K562 (cell line): ENCODE measurements at regions of chr1 and their contacts with region 1.

Region 1: GRCh38 chr1:7902478-7903085 is 38.1 kb downstream of the TNFRSF9 start:
- DNase-seq: peak; percentile 81 to 87 (median 85)
- ATAC-seq: peak; percentile 98
- H3K4me3 ChIP-seq: no peak overlapping the region
- H3K27ac ChIP-seq: no peak overlapping the region
- H3K4me1 ChIP-seq: peaks cover 0 to 3% of the 10 kb centered on the region in 2 experiments; a peak in 3 of 5 replicates
- H3K27me3 ChIP-seq: peaks cover 3 to 9% of the 10 kb centered on the region in 2 experiments; a peak in 4 of 5 replicates
- CTCF ChIP-seq: peak; percentile 73 to 85 (median 84)
- EP300 ChIP-seq: no peak
- POLR2A ChIP-seq: no peak
- RAD21 ChIP-seq: peak; percentile 80 to 92

Region 2: DNA sequence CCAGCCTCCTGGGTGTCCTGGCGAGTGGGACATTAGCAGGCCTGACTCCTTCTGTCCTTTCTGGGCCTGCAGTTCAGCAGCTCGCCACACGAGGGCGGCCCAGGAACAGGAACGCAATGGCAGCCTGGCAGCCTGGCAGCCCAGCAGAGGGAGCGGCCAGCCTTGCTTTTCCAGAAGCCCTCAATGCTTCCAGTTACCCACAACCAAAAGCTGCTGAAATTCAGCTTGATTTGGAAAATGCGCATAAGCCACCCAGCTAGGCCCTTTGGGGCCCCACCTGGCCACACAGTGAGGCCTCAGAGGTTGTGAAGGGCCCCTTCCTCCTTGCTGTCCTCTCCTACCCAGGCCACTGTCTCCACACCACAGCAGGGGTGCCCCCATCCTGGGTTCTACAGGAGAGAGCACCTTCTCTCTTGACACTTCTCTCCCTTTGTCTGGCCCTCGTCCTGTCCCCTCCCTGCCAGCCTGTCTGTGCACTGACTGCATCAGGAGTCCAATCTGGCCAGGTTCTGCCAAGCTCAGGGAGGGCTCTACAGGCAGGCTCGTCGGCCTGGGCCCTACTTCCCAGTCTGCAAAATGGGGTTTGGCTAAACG is 234.9 kb before region 1 on chr1:
- CTCF ChIA-PET with region 1: interaction called, 43 read pairs
- POLR2A ChIA-PET with region 1: interaction called, 3 read pairs
- in situ Hi-C with region 1: no loop called
- intact Hi-C with region 1: loop called (anchors 2 kb)
- DNase-seq: peak; percentile 82 to 85 (median 84)
- ATAC-seq: peak; percentile 85
- H3K4me3 ChIP-seq: no peak overlapping the region
- H3K27ac ChIP-seq: no peak overlapping the region
- H3K4me1 ChIP-seq: peaks cover 0 to 35% of the 10 kb centered on the region in 2 experiments; a peak in 2 of 5 replicates
- H3K27me3 ChIP-seq: peaks cover 27 to 58% of the 10 kb centered on the region in 2 experiments; a peak in 4 of 5 replicates
- CTCF ChIP-seq: peak; percentile 99
- EP300 ChIP-seq: no peak
- POLR2A ChIP-seq: no peak
- RAD21 ChIP-seq: peak; percentile 94 to 98

Region 3: GRCh38 chr1:7680207-7680954 is 222.2 kb before region 1 on chr1:
- CTCF ChIA-PET with region 1: no interaction called
- POLR2A ChIA-PET with region 1: no interaction called
- in situ Hi-C with region 1: loop called (anchors 5 kb)
- intact Hi-C with region 1: no loop called
- DNase-seq: peak; percentile 18 to 75 (median 60)
- ATAC-seq: peak; percentile 68
- H3K4me3 ChIP-seq: peak overlapping the region; percentile 34
- H3K27ac ChIP-seq: no peak overlapping the region
- H3K4me1 ChIP-seq: peaks cover 0 to 18% of the 10 kb centered on the region in 2 experiments; a peak in 2 of 5 replicates
- H3K27me3 ChIP-seq: peaks cover 75 to 98% of the 10 kb centered on the region in 2 experiments
- CTCF ChIP-seq: no peak
- EP300 ChIP-seq: no peak
- POLR2A ChIP-seq: no peak
- RAD21 ChIP-seq: no peak

Region 4: GRCh38 chr1:7752512-7753417 is 149.8 kb before region 1 on chr1:
- CTCF ChIA-PET with region 1: no interaction called
- POLR2A ChIA-PET with region 1: no interaction called
- in situ Hi-C with region 1: no loop called
- intact Hi-C with region 1: loop called (anchors 5 kb)
- DNase-seq: peak; percentile 34 to 71 (median 50)
- ATAC-seq: peak; percentile 75
- H3K4me3 ChIP-seq: no peak overlapping the region
- H3K27ac ChIP-seq: no peak overlapping the region
- H3K4me1 ChIP-seq: no peaks in the 10 kb centered on the region
- H3K27me3 ChIP-seq: peaks cover 21 to 35% of the 10 kb centered on the region in 2 experiments
- CTCF ChIP-seq: peak; percentile 73 to 87 (median 87)
- EP300 ChIP-seq: no peak
- POLR2A ChIP-seq: no peak
- RAD21 ChIP-seq: peak; percentile 57 to 84

Region 5: DNA sequence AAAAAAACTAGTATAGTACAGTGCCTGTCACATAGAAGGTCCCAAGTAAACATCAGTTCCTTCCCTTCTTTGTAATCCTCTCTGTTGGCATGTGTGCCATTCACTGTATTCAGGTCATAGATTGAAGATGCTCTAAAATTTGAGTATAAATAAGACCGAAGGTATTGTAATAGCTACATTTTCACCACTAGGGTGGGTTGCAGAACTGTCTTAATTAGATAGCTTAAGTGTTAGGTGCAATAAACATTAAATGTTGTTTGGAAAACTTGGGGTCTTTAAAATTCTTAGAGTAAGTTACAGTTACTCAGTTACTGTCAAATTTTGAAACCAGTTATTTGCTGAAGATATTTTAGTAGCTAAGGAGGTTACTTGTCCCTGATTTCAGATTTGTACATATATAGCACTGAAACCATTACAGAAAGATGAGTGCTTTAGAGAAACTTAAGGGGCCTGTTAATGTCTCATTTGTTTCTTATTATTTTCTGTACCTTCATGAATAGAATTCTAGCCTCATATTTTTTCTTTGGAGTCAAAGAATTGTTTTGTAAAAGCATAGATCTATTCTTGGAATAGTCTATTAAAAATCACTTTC is 94.2 kb before region 1 on chr1:
- CTCF ChIA-PET with region 1: interaction called, 6 read pairs
- POLR2A ChIA-PET with region 1: interaction called, 3 read pairs
- in situ Hi-C with region 1: loop called (anchors 5 kb)
- intact Hi-C with region 1: loop called (anchors 1 kb)
- DNase-seq: peak in 3 of 4 experiments; percentile 21 to 54 (median 25)
- ATAC-seq: peak; percentile 84
- H3K4me3 ChIP-seq: no peak overlapping the region
- H3K27ac ChIP-seq: no peak overlapping the region
- H3K4me1 ChIP-seq: 0 out of 5 replicates have a peak, but pooled peaks cover 0 to 2% of the 10 kb centered on the region in 2 experiments
- H3K27me3 ChIP-seq: no peaks in the 10 kb centered on the region
- CTCF ChIP-seq: peak; percentile 48 to 84 (median 57); a peak in 5 of 6 replicates
- EP300 ChIP-seq: no peak
- POLR2A ChIP-seq: no peak
- RAD21 ChIP-seq: peak; percentile 66 to 81